Activated naive CD4-positive, alpha-beta T cell treated with anti-CD3 and anti-CD28 coated beads for 36 hours (primary cell): ENCODE measurements at regions of chr15 and their contacts with region 1.

Region 1: GRCh38 chr15:91302588-91303439 is 202.8 kb downstream of the SV2B start:
- DNase-seq: peak; percentile 29
- H3K4me3 Mint-ChIP-seq: no peak overlapping the region
- H3K27ac Mint-ChIP-seq: no peak overlapping the region
- H3K4me1 Mint-ChIP-seq: peaks cover 31% of the 10 kb centered on the region
- H3K27me3 Mint-ChIP-seq: no peaks in the 10 kb centered on the region

Region 2: GRCh38 chr15:91522663-91523332 is 220.0 kb after region 1 on chr15:
- CTCF ChIA-PET with region 1: interaction called, 6 read pairs
- intact Hi-C with region 1: loop called (anchors 1 kb)
- DNase-seq: peak; percentile 17
- H3K4me3 Mint-ChIP-seq: no peak overlapping the region
- H3K27ac Mint-ChIP-seq: no peak overlapping the region
- H3K4me1 Mint-ChIP-seq: peaks cover 24% of the 10 kb centered on the region
- H3K27me3 Mint-ChIP-seq: no peaks in the 10 kb centered on the region

Region 3: GRCh38 chr15:91589356-91589755 is 286.5 kb after region 1 on chr15:
- CTCF ChIA-PET with region 1: interaction called, 3 read pairs
- intact Hi-C with region 1: loop called (anchors 1 kb)
- DNase-seq: peak; percentile 18
- H3K4me3 Mint-ChIP-seq: no peak overlapping the region
- H3K27ac Mint-ChIP-seq: no peak overlapping the region
- H3K4me1 Mint-ChIP-seq: peaks cover 4% of the 10 kb centered on the region
- H3K27me3 Mint-ChIP-seq: no peaks in the 10 kb centered on the region

Region 4: GRCh38 chr15:91942676-91943576 is 640.1 kb after region 1 on chr15:
- CTCF ChIA-PET with region 1: interaction called, 5 read pairs
- intact Hi-C with region 1: loop called (anchors 5 kb)
- DNase-seq: peak; percentile 64
- H3K4me3 Mint-ChIP-seq: no peak overlapping the region
- H3K27ac Mint-ChIP-seq: no peak overlapping the region
- H3K4me1 Mint-ChIP-seq: peaks cover 37% of the 10 kb centered on the region
- H3K27me3 Mint-ChIP-seq: no peaks in the 10 kb centered on the region